ENCODE measurements at regions of chr16 and their contacts with region 1.

Region 1: DNA sequence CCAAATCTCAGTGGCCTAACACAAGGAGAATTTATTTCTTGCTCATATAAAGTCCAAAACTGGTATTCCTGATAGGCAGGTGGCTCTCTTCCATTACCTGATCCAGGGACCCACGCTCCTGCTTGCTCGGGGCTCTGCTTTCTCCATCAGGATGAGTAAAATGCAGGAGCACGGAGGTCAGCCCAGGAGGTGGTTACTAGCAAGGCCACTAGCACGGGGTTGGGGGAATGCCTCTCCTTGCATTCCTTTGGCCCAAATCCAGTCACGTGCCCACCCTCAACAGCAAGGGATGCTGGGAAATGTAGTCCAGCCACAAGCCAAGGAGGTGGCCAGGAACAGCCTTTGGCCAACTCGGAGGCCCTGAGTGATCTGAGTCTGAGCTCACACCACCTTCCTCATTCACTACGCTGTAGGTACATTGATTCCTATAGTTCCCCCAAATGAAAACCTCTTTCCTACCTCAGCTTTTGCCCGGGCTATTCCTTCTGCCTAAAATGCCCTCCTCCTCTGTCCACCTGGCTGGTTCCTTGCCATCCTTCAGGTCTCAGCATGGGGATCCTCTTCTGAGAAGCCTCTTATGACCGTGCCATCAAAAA is 38.3 kb upstream of the HAPSTR1 start:
- DNase-seq: peak; percentile 71
- H3K4me3 ChIP-seq: no peak overlapping the region
- H3K27ac ChIP-seq: no peak overlapping the region
- H3K4me1 ChIP-seq: peaks cover 3% of the 10 kb centered on the region
- H3K27me3 ChIP-seq: no peaks in the 10 kb centered on the region
- CTCF ChIP-seq: no peak

Region 2: DNA sequence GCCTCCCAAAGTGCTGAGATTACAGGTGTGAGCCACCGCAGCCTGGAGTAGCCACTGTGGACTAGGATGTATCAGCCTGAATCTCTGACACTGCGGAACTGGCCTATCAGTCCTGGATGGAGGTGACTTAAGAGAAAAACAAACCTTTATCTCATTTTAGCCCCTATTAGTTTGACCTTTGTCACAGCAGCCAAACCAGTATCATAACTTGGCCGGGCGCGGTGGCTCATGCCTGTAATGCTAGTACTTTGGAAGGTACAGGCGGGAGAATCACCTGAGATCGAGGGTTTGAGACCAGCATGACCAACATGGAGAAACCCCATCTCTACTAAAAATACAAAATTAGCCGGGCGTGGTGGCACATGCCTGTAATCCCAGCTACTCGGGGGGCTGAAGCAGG is 37.6 kb before region 1 on chr16:
- CTCF ChIA-PET with region 1: no interaction called
- POLR2A ChIA-PET with region 1: interaction called, 10 read pairs
- intact Hi-C with region 1: no loop called
- DNase-seq: no peak
- H3K4me3 ChIP-seq: no peak overlapping the region
- H3K27ac ChIP-seq: no peak overlapping the region
- H3K4me1 ChIP-seq: no peaks in the 10 kb centered on the region
- H3K27me3 ChIP-seq: no peaks in the 10 kb centered on the region
- CTCF ChIP-seq: no peak